ENCODE measurements at regions of chr14 and their contacts with region 1.

Region 1: GRCh38 chr14:67166450-67166853 is 22.8 kb upstream of the GARIN2 start:
- DNase-seq: peak; percentile 58
- ATAC-seq: no peak
- H3K4me3 Mint-ChIP-seq: no peak overlapping the region
- H3K27ac Mint-ChIP-seq: no peak overlapping the region
- H3K4me1 Mint-ChIP-seq: no peaks in the 10 kb centered on the region
- H3K27me3 Mint-ChIP-seq: no peaks in the 10 kb centered on the region

Region 2: DNA sequence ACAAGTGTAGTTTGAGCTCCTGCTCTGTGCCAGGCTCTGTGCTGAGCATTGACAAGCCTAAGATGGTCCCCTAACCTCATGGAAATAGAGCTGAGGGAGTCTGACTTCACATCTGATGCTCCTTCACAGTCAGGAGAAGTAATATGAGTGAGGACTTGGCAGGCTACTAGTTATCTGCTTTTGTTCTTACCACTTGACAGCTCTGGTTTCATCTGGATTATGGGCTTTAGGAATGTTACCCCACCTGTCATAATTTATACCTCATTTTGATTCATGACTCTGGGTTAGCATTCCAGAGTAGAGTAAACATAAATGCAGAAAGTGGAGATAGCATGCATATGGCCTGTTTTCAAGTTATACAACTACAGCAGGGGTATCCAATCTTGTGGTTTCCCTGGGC is 152.7 kb after region 1 on chr14:
- CTCF ChIA-PET with region 1: no interaction called
- POLR2A ChIA-PET with region 1: no interaction called
- intact Hi-C with region 1: no loop called
- DNase-seq: no peak
- ATAC-seq: no peak
- H3K4me3 Mint-ChIP-seq: no peak overlapping the region
- H3K27ac Mint-ChIP-seq: no peak overlapping the region
- H3K4me1 Mint-ChIP-seq: no peaks in the 10 kb centered on the region
- H3K27me3 Mint-ChIP-seq: no peaks in the 10 kb centered on the region

Region 3: GRCh38 chr14:67335781-67336180 is 169.3 kb after region 1 on chr14:
- CTCF ChIA-PET with region 1: interaction called, 5 read pairs
- POLR2A ChIA-PET with region 1: no interaction called
- intact Hi-C with region 1: loop called (anchors 1 to 2 kb)
- DNase-seq: peak; percentile 30
- ATAC-seq: no peak
- H3K4me3 Mint-ChIP-seq: no peak overlapping the region
- H3K27ac Mint-ChIP-seq: no peak overlapping the region
- H3K4me1 Mint-ChIP-seq: no peaks in the 10 kb centered on the region
- H3K27me3 Mint-ChIP-seq: no peaks in the 10 kb centered on the region

Region 4: GRCh38 chr14:67410313-67410712 is 243.9 kb after region 1 on chr14:
- CTCF ChIA-PET with region 1: no interaction called
- POLR2A ChIA-PET with region 1: no interaction called
- intact Hi-C with region 1: no loop called
- DNase-seq: no peak
- ATAC-seq: no peak
- H3K4me3 Mint-ChIP-seq: no peak overlapping the region
- H3K27ac Mint-ChIP-seq: no peak overlapping the region
- H3K4me1 Mint-ChIP-seq: peaks cover 17% of the 10 kb centered on the region
- H3K27me3 Mint-ChIP-seq: no peaks in the 10 kb centered on the region

Measured in activated CD4-positive, alpha-beta T cell treated with anti-CD3 and anti-CD28 coated beads for 36 hours (primary cell).